GM10248 (cell line): ENCODE measurements at regions of chr1 and their contacts with region 1.

Region 1: GRCh38 chr1:24586970-24587820 is 31.3 kb downstream of the NCMAP start:
- DNase-seq: peak; percentile 79
- CTCF ChIP-seq: peak; percentile 68

Region 2: GRCh38 chr1:24415334-24415909 is 171.8 kb before region 1 on chr1 and contains the start of gene NIPAL3:
- CTCF ChIA-PET with region 1: interaction called, 15 read pairs
- POLR2A ChIA-PET with region 1: no interaction called
- DNase-seq: peak; percentile 97
- CTCF ChIP-seq: peak; percentile 85

Region 3: GRCh38 chr1:24491577-24492360 is 95.4 kb before region 1 on chr1:
- CTCF ChIA-PET with region 1: no interaction called
- POLR2A ChIA-PET with region 1: no interaction called
- DNase-seq: no peak
- CTCF ChIP-seq: no peak

Region 4: GRCh38 chr1:24526940-24527542 is 60.2 kb before region 1 on chr1:
- CTCF ChIA-PET with region 1: interaction called, 13 read pairs
- POLR2A ChIA-PET with region 1: no interaction called
- DNase-seq: peak; percentile 26
- CTCF ChIP-seq: peak; percentile 49

Region 5: GRCh38 chr1:24562625-24563024 is 24.6 kb before region 1 on chr1:
- CTCF ChIA-PET with region 1: interaction called, 22 read pairs
- POLR2A ChIA-PET with region 1: no interaction called
- DNase-seq: no peak
- CTCF ChIP-seq: no peak

Region 6: DNA sequence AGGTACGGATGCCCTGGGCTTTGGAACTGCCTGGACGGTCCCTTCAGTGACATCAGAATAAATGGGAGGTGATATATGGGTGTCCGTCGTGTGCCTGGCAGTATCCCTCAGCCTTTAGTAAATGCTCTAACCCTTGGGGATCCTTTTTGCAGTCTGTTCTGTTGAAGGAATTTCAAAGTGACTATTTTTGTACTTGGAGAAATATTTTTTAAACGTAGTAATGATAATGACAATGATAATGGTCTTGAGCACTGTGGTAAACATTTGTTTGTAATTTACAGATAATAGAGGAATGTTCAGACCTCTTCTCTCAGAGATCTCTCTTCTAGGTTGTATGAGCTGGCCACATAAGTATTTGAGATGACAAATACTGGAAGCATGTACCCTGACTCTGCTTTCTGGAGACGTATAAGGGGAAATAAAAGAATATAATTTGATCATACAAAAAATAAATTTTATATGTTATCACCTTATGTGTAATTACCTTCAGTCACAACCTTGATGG is 13.9 kb after region 1 on chr1:
- CTCF ChIA-PET with region 1: interaction called, 21 read pairs
- POLR2A ChIA-PET with region 1: no interaction called
- DNase-seq: no peak
- CTCF ChIP-seq: no peak